ENCODE measurements at regions of chr6 and their contacts with region 1.

Region 1: DNA sequence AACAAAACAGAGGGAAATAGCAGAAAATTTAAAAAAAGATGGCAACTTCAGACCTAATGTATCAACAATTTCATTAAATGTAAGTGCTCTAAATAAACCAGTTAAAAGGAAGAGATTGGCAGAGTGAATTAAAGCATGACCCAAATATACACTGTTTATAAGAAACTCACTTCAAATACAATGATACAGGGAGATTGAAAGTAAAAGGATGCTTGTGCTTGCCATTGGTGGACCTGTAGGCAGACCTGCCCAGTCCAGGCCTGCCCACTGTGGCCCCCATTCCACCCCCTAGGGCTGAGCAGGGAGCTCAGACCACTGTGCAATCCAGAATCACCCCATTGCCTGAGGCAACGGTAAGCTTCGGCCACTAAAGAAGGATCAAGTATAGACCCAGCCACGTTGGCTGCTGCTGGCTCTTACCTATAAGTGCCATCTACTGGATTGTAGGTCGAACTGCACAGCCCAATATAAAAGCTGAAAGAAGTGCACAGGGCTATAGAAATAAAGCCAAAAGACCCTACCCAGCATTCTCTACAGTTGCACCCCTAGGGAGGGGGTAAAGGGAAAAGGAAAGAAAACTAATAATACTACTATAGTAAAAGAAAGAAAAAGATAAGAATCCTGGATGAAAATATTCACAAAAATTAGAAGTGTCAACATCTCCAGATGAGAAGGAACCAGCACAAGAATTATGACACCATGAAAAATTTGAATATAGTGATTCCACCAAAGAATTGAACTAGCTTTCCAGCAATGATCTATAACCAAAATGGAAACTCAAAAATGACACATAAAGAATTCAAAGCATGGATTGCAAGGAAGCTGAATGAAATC is 36.1 kb downstream of the PSMB1 start:
- DNase-seq: peak; percentile 41
- H3K4me3 ChIP-seq: no peak overlapping the region
- H3K27ac ChIP-seq: no peak overlapping the region
- H3K4me1 ChIP-seq: peaks cover 0 to 3% (median 0%) of the 10 kb centered on the region in 4 donors
- H3K27me3 ChIP-seq: peaks cover 6% of the 10 kb centered on the region
- CTCF ChIP-seq: peak; percentile 67 to 78 (median 72)
- EP300 ChIP-seq: no peak
- POLR2A ChIP-seq: no peak

Region 2: GRCh38 chr6:169789982-169790927 is 726.7 kb before region 1 on chr6:
- in situ Hi-C with region 1: loop called in 1 of 4 experiments (anchors 10 kb)
- intact Hi-C with region 1: loop called (anchors 10 kb)
- DNase-seq: peak; percentile 79
- H3K4me3 ChIP-seq: peak overlapping the region; percentile 30 to 54 (median 32)
- H3K27ac ChIP-seq: peak overlapping the region; percentile 69 to 82 (median 74)
- H3K4me1 ChIP-seq: peaks cover 0 to 16% (median 14%) of the 10 kb centered on the region in 4 donors
- H3K27me3 ChIP-seq: no peaks in the 10 kb centered on the region
- CTCF ChIP-seq: peak; percentile 96 to 99 (median 96)
- EP300 ChIP-seq: no peak
- POLR2A ChIP-seq: no peak

Region 3: DNA sequence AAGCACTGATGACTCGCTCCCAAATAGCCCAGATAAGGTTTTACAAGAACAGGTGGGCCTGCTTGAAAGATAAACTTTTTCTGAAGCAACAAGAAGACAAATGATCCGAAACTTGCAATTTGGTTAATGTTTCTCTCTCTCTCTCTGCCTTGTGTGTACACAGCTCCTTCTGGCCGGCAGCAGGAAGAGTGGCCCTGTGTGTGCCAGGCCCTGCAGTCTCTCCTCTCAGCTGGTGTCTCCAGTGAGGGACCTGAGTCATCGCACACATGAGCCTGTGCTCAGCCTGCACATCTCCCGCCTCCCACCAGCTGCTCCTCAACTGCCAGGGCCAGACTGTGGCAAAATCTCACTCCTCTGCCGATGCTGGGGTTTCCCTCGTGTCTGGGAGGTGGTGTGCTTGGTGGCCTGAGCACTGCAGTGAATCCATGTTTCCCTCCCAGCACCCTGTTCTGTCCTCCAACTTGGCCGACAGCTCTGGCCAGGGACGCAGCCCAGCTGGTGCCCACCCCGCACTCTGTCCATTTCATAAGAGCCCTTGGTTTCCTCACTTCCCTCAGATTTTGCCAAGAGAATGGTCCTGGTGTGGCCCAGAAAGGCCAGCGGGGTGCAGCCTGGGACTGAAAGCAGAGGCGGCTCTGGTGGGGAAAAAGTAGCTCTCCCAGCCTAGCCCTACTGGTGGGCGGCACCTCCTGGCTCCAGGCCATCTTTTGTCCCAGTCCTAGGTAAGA is 716.2 kb before region 1 on chr6:
- in situ Hi-C with region 1: loop called in 2 of 4 experiments (anchors 10 kb)
- intact Hi-C with region 1: loop called (anchors 10 kb)
- DNase-seq: peak; percentile 30
- H3K4me3 ChIP-seq: no peak overlapping the region
- H3K27ac ChIP-seq: peak overlapping the region in 2 of 4 donors; percentile 4 to 24
- H3K4me1 ChIP-seq: peaks cover 11 to 17% (median 14%) of the 10 kb centered on the region in 4 donors
- H3K27me3 ChIP-seq: no peaks in the 10 kb centered on the region
- CTCF ChIP-seq: no peak
- EP300 ChIP-seq: no peak
- POLR2A ChIP-seq: no peak

Region 4: DNA sequence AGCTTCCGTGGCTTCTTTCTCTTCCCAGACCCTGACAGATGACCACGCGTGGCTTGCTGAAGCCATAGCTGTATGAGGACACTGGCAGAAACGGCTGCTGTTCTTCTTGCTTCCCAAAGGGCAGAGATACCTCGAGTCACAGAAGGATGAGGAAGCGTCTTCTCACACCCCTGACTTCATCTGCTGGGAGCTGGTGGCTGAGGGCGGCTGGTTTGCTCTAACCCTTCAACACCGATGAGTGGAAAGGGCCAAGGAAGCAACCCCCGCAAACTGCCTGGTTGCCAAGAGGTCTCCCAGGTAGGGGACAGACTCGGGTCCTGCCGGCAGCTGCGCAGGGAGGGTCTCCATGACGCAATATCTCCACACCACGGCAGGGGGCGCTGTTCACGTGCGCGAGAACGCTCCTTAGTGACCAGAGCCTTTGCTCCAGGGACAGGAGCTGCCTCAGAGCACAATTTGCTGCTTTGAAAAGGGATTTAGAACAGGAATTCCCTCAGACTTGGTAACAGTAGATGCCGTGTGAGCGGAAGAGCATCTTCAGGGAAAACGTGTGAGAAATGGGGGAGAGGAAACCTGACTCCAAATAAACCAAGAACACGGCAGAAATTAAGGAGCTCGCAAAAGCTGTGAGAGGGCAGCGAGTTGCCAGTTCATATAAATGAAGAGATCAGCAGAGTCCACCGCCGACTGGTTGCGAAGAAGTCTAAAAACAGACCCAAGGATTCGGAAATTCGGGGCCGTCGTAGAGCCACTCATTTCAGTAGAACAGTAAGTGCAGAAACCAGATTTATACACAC is 685.4 kb before region 1 on chr6:
- in situ Hi-C with region 1: loop called in 2 of 4 experiments (anchors 10 kb)
- intact Hi-C with region 1: no loop called
- DNase-seq: peak; percentile 72
- H3K4me3 ChIP-seq: no peak overlapping the region
- H3K27ac ChIP-seq: no peak overlapping the region
- H3K4me1 ChIP-seq: peaks cover 0 to 3% (median 0%) of the 10 kb centered on the region in 4 donors
- H3K27me3 ChIP-seq: peaks cover 4% of the 10 kb centered on the region
- CTCF ChIP-seq: peak; percentile 91 to 94 (median 91)
- EP300 ChIP-seq: no peak
- POLR2A ChIP-seq: no peak

Region 5: DNA sequence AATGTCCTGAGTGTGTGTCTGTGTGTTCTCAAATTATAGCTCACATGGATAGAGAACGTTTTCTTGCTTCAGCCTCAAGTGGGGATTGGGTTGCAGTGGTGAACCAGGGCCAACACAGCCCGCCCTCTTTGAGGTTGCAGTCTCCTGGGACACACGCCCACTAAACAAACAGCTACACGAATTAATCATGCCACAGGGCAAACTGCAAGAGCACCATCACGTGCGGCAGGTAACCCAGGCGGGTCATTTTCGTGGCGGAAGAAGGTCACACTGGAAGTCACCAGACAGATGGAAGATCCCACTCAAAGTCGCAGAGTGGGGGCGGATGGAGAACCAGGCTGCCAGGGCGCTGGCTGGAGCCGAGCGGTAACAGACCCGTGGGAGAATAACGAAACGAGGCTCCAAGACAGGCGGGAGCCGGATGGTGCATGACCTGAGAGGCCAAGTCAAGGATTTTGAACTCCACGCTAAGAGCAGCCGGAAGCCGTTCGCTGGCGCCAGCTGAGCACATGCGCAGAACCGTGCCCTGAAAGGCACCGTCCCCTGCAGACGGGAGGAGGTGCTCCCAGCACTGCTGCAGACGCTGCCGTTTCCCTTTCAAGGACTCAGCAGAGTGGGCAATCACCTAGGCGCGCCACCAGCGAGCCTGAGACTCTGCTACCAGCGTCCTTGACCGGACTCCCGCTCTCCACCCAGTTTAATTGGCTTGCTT is 236.9 kb before region 1 on chr6:
- in situ Hi-C with region 1: no loop called
- intact Hi-C with region 1: no loop called
- DNase-seq: peak; percentile 82
- H3K4me3 ChIP-seq: peak overlapping the region in 2 of 4 donors; percentile 24 to 40
- H3K27ac ChIP-seq: peak overlapping the region; percentile 76 to 82 (median 80)
- H3K4me1 ChIP-seq: peaks cover 0 to 42% (median 7%) of the 10 kb centered on the region in 4 donors
- H3K27me3 ChIP-seq: no peaks in the 10 kb centered on the region
- CTCF ChIP-seq: no peak
- EP300 ChIP-seq: no peak
- POLR2A ChIP-seq: peak; percentile 61

Region 6: GRCh38 chr6:170561561-170562220 is 44.7 kb after region 1 on chr6:
- in situ Hi-C with region 1: no loop called
- intact Hi-C with region 1: no loop called
- DNase-seq: no peak
- H3K4me3 ChIP-seq: no peak overlapping the region
- H3K27ac ChIP-seq: no peak overlapping the region
- H3K4me1 ChIP-seq: no peaks in the 10 kb centered on the region
- H3K27me3 ChIP-seq: no peaks in the 10 kb centered on the region
- CTCF ChIP-seq: no peak
- EP300 ChIP-seq: no peak
- POLR2A ChIP-seq: no peak